WTC11 (cell line): ENCODE measurements at regions of chr4 and their contacts with region 1.

Region 1: DNA sequence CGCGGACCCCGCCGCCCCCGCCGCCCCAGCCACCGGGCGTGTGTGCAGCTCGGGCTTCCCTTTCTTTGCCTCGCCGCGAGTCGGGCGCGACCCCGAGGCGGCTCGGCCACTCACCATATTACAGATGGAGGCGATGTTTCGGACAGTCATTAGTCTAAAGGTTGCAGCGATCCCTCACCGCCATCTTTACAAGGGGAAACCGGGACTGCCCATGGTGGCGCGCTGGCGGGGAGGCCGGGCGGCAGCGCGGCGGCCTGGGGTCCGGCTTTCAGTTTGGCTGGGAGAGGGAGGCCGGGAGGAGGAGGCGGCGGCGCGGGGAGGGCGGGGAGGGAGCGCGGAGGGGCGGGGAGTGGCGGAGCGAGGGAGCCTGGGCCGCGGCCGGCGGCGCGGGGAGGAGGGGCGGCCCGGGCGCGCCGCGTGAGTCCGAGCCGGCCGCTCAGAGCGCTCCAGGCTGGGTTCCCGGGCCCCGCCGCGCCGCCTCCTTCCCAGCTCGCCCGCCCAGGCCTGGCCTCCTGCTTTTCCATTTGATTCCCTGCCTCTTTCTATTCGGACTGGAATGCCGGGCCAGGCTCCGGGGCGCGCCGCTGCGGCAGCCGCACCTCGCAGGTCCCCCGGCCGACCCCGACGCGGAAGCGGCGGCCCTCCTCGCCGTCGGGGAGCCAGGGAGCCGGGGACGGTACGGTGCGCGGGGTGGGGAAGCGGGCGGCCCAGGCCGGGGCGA is at the start of gene USP46:
- DNase-seq: peak; percentile 68
- ATAC-seq: peak; percentile 62
- H3K4me3 Mint-ChIP-seq: peak within 1 kb of the TSS; percentile 78
- H3K27ac Mint-ChIP-seq: peak within 1 kb of the TSS; percentile 93; the same call in 1 of the 2 replicates
- H3K4me1 Mint-ChIP-seq: peaks cover 51% of the 10 kb centered on the region
- H3K27me3 Mint-ChIP-seq: peaks cover 10% of the 10 kb centered on the region
- CTCF ChIP-seq: no peak
- total RNA-seq, gene USP46: 48.1 to 54.1 TPM (median 49.5 TPM) in 3 replicates

Region 2: GRCh38 chr4:52431410-52431809 is 227.8 kb before region 1 on chr4:
- CTCF ChIA-PET with region 1: no interaction called
- POLR2A ChIA-PET with region 1: no interaction called
- DNase-seq: no peak
- ATAC-seq: no peak
- H3K4me3 Mint-ChIP-seq: no peak overlapping the region
- H3K27ac Mint-ChIP-seq: no peak overlapping the region
- H3K4me1 Mint-ChIP-seq: peaks cover 4% of the 10 kb centered on the region; the same call in 1 of the 2 replicates
- H3K27me3 Mint-ChIP-seq: no peaks in the 10 kb centered on the region
- CTCF ChIP-seq: no peak

Region 3: DNA sequence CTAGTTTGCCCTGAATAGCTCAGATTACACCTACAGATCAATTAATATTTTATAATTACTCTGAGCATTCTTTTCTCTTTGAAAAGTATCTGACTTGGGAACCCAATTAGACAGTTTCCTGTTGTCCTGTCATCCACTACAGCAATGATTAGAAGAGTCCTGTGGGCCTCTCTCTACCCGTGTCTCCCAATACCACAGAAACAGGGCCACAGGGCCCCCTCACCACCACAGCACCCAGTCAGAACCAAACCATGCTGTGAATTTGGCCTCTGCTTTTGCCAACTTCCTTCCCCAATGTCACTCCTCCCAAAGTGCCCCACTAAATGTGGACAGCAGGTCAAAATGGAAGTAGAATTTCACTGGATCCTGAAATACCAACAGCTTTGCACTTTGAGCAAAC is 10.3 kb before region 1 on chr4:
- CTCF ChIA-PET with region 1: interaction called, 11 read pairs
- POLR2A ChIA-PET with region 1: interaction called, 4 read pairs
- DNase-seq: no peak
- ATAC-seq: no peak
- H3K4me3 Mint-ChIP-seq: no peak overlapping the region
- H3K27ac Mint-ChIP-seq: no peak overlapping the region
- H3K4me1 Mint-ChIP-seq: peaks cover 82% of the 10 kb centered on the region
- H3K27me3 Mint-ChIP-seq: no peaks in the 10 kb centered on the region
- CTCF ChIP-seq: no peak

Region 4: DNA sequence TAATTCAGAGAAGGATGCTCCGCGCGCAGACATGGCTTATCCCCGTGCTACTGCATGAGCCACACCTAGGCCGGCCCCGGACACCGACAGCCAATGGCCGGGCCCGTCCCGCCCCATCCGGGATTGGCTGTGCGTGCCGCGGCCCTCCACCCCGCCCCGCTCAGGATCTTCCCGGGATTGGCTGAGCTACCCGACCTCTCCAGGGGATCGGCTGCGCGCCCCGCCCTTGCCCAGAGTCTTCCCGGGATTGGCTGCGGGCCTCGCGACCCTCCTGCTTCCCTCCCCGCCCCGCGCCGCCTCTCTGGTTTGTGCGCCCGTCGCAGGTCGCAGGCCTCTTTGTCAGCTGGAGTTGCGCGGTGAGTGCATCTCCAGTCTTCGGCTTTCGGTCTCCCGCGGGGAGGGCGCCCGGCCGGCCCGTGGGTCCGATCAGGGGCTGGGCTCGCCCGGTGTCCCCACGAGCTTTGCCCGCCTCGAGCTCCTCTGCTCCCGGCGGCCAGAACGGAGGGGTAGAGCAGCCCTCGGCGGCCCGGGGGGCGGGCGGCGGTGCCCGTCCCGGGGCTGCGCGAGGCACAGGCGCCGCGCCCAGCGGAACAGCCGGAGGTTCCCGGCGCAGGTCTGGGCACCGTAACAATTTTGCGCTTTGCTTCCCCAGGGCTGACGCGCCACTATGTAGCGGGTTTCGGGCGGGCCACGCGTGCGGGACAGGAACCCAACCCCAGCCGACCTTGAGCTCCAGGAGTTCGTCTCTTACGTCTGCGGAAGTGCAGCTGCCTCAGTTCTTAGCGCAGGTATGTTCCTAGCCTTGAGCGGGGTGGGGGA is 53.2 kb after region 1 on chr4:
- CTCF ChIA-PET with region 1: interaction called, 8 read pairs
- POLR2A ChIA-PET with region 1: interaction called, 32 read pairs
- DNase-seq: peak; percentile 99
- ATAC-seq: peak; percentile 95
- H3K4me3 Mint-ChIP-seq: peak overlapping the region; percentile 88
- H3K27ac Mint-ChIP-seq: peak overlapping the region; percentile 96
- H3K4me1 Mint-ChIP-seq: peaks cover 44% of the 10 kb centered on the region
- H3K27me3 Mint-ChIP-seq: no peaks in the 10 kb centered on the region
- CTCF ChIP-seq: no peak